PC-9 (cell line): ENCODE measurements at regions of chr11 and their contacts with region 1.

Region 1: GRCh38 chr11:118353084-118353710 is 6.2 kb upstream of the UBE4A start:
- DNase-seq: no peak
- H3K4me3 ChIP-seq: no peak overlapping the region
- H3K27ac ChIP-seq: no peak overlapping the region
- H3K4me1 ChIP-seq: peaks cover 21% of the 10 kb centered on the region
- H3K27me3 ChIP-seq: no peaks in the 10 kb centered on the region
- CTCF ChIP-seq: peak; percentile 86

Region 2: GRCh38 chr11:118033443-118033842 is 319.8 kb before region 1 on chr11:
- CTCF ChIA-PET with region 1: interaction called, 10 read pairs
- POLR2A ChIA-PET with region 1: no interaction called
- intact Hi-C with region 1: no loop called
- DNase-seq: peak in 1 of 2 experiments; percentile 28
- H3K4me3 ChIP-seq: no peak overlapping the region
- H3K27ac ChIP-seq: no peak overlapping the region
- H3K4me1 ChIP-seq: no peaks in the 10 kb centered on the region
- H3K27me3 ChIP-seq: peaks cover 30% of the 10 kb centered on the region
- CTCF ChIP-seq: no peak

Region 3: GRCh38 chr11:118198370-118198769 is 154.8 kb before region 1 on chr11:
- CTCF ChIA-PET with region 1: interaction called, 15 read pairs
- POLR2A ChIA-PET with region 1: no interaction called
- intact Hi-C with region 1: loop called (anchors 1 kb)
- DNase-seq: peak in 1 of 2 experiments; percentile 74
- H3K4me3 ChIP-seq: peak overlapping the region; percentile 44; the same call in 1 of the 2 replicates
- H3K27ac ChIP-seq: no peak overlapping the region
- H3K4me1 ChIP-seq: peaks cover 16% of the 10 kb centered on the region
- H3K27me3 ChIP-seq: no peaks in the 10 kb centered on the region
- CTCF ChIP-seq: peak; percentile 98

Region 4: DNA sequence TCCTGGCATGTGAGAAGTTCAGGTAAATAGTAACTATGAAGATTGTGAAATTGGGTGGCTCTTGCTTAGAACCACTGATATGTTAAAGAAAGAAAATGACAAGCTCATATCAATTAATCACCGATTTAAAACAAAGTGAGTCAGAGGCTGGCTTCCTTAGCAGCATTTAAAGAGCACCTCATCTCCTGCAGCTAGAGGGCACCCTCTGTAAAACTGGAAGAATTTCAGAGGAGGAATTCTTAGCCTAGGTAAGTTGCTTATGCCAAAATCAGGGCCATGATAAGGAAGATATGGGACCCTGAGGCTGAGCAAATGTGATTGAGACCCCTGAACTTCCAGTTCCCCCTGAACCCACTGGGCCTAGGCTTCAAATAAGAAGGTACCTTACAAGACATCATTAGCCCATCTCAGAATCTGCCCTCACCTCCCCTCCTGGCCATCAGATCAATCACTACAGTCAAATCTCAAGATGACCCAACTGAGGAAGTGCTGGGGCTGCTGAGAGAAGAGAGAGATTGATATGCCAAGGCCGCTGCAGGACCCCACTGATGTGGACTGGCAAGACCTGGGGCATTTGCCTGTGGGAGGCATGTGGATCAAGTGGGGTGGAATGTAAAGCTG is 57.3 kb before region 1 on chr11:
- CTCF ChIA-PET with region 1: no interaction called
- POLR2A ChIA-PET with region 1: no interaction called
- intact Hi-C with region 1: loop called (anchors 1 kb)
- DNase-seq: peak in 1 of 2 experiments; percentile 93
- H3K4me3 ChIP-seq: no peak overlapping the region
- H3K27ac ChIP-seq: no peak overlapping the region
- H3K4me1 ChIP-seq: peaks cover 11% of the 10 kb centered on the region
- H3K27me3 ChIP-seq: peaks cover 2% of the 10 kb centered on the region; the same call in 1 of the 2 replicates
- CTCF ChIP-seq: peak; percentile 87